ENCODE measurements at regions of chrX and their contacts with region 1.

Region 1: GRCh38 chrX:129823115-129823514 is 20.6 kb downstream of the ZDHHC9 start:
- DNase-seq: no peak
- ATAC-seq: peak; percentile 97
- H3K4me3 ChIP-seq: no peak overlapping the region
- H3K27ac ChIP-seq: no peak overlapping the region
- H3K4me1 ChIP-seq: no peaks in the 10 kb centered on the region
- H3K27me3 ChIP-seq: no peaks in the 10 kb centered on the region
- CTCF ChIP-seq: peak; percentile 66 to 77 (median 69)
- EP300 ChIP-seq: no peak
- POLR2A ChIP-seq: no peak
- RAD21 ChIP-seq: peak; percentile 78

Region 2: GRCh38 chrX:129606918-129607317 is 216.2 kb before region 1 on chrX:
- CTCF ChIA-PET with region 1: interaction called, 7 read pairs
- POLR2A ChIA-PET with region 1: no interaction called
- RAD21 ChIA-PET with region 1: no interaction called
- SMC1A ChIA-PET with region 1: interaction called, 5 read pairs
- in situ Hi-C with region 1: no loop called
- intact Hi-C with region 1: loop called (anchors 1 kb)
- DNase-seq: peak; percentile 13
- ATAC-seq: peak; percentile 67
- H3K4me3 ChIP-seq: no peak overlapping the region
- H3K27ac ChIP-seq: no peak overlapping the region
- H3K4me1 ChIP-seq: peaks cover 5% of the 10 kb centered on the region
- H3K27me3 ChIP-seq: no peaks in the 10 kb centered on the region; a peak in 2 of 4 replicates
- CTCF ChIP-seq: peak; percentile 74 to 80 (median 76)
- EP300 ChIP-seq: no peak
- POLR2A ChIP-seq: no peak
- RAD21 ChIP-seq: peak; percentile 82

Region 3: GRCh38 chrX:129655863-129656249 is 167.3 kb before region 1 on chrX:
- CTCF ChIA-PET with region 1: interaction called, 5 read pairs
- POLR2A ChIA-PET with region 1: no interaction called
- RAD21 ChIA-PET with region 1: interaction called, 6 read pairs
- SMC1A ChIA-PET with region 1: interaction called, 3 read pairs
- in situ Hi-C with region 1: no loop called
- intact Hi-C with region 1: loop called (anchors 1 kb)
- DNase-seq: no peak
- ATAC-seq: peak; percentile 51; the same call in 2 of the 3 replicates
- H3K4me3 ChIP-seq: no peak overlapping the region
- H3K27ac ChIP-seq: no peak overlapping the region
- H3K4me1 ChIP-seq: no peaks in the 10 kb centered on the region
- H3K27me3 ChIP-seq: peaks cover 4% of the 10 kb centered on the region in 2 experiments; a peak in 3 of 4 replicates
- CTCF ChIP-seq: peak; percentile 20 to 50 (median 37); a peak in 4 of 6 replicates
- EP300 ChIP-seq: no peak
- POLR2A ChIP-seq: no peak
- RAD21 ChIP-seq: peak; percentile 53

Region 4: GRCh38 chrX:129737916-129738315 is 85.2 kb before region 1 on chrX:
- CTCF ChIA-PET with region 1: interaction called, 3 read pairs
- POLR2A ChIA-PET with region 1: no interaction called
- RAD21 ChIA-PET with region 1: interaction called, 11 read pairs
- SMC1A ChIA-PET with region 1: interaction called, 4 read pairs
- in situ Hi-C with region 1: no loop called
- intact Hi-C with region 1: no loop called
- DNase-seq: no peak
- ATAC-seq: peak; percentile 67
- H3K4me3 ChIP-seq: no peak overlapping the region
- H3K27ac ChIP-seq: no peak overlapping the region
- H3K4me1 ChIP-seq: no peaks in the 10 kb centered on the region
- H3K27me3 ChIP-seq: no peaks in the 10 kb centered on the region; a peak in 1 of 4 replicates
- CTCF ChIP-seq: peak in 1 of 3 experiments; percentile 15; a peak in 1 of 6 replicates
- EP300 ChIP-seq: no peak
- POLR2A ChIP-seq: no peak
- RAD21 ChIP-seq: peak; percentile 31; the same call in 1 of the 2 replicates

Region 5: GRCh38 chrX:129759576-129760061 is 63.5 kb before region 1 on chrX:
- CTCF ChIA-PET with region 1: interaction called, 80 read pairs
- POLR2A ChIA-PET with region 1: interaction called, 4 read pairs
- RAD21 ChIA-PET with region 1: interaction called, 29 read pairs
- SMC1A ChIA-PET with region 1: interaction called, 27 read pairs
- in situ Hi-C with region 1: no loop called
- intact Hi-C with region 1: loop called (anchors 1 kb)
- DNase-seq: no peak
- ATAC-seq: peak; percentile 61
- H3K4me3 ChIP-seq: no peak overlapping the region
- H3K27ac ChIP-seq: peak overlapping the region; percentile 38; the same call in 1 of the 2 replicates
- H3K4me1 ChIP-seq: peaks cover 29% of the 10 kb centered on the region
- H3K27me3 ChIP-seq: no peaks in the 10 kb centered on the region
- CTCF ChIP-seq: 0 out of 6 replicates have a peak, but pooled peaks of 1 of the 3 experiments have one; percentile 20
- EP300 ChIP-seq: no peak
- POLR2A ChIP-seq: no peak
- RAD21 ChIP-seq: peak; percentile 44; the same call in 1 of the 2 replicates

Region 6: DNA sequence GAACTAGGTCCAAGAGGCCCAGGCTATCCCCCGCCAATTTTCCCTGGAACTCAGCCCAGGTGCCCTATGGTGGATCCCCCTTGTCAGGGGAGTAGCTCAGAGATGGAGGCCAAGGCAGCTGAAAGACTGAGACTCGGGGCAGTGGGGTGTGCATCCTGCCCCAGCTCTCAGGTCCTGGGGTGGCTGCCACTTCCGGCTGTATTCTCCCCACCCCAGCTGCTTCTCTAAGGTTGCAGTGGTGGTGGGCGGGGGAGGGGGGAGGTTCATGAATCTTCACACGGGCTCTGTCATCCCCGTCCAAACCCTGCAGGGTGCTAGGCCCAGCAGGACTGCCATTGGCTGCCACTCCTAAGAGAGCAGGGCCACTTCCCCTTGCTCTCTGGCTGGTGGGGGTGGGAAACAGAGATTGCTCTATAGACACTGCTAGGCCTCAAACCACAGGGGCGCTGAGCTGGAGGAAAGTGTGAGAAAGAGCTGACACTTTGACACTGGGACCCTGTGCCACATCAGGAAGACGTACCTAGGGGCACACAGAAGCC is 41.9 kb before region 1 on chrX:
- CTCF ChIA-PET with region 1: interaction called, 16 read pairs
- POLR2A ChIA-PET with region 1: no interaction called
- RAD21 ChIA-PET with region 1: interaction called, 8 read pairs
- SMC1A ChIA-PET with region 1: interaction called, 20 read pairs
- in situ Hi-C with region 1: no loop called
- intact Hi-C with region 1: loop called (anchors 1 kb)
- DNase-seq: peak; percentile 83
- ATAC-seq: peak; percentile 79
- H3K4me3 ChIP-seq: peak overlapping the region; percentile 84
- H3K27ac ChIP-seq: peak overlapping the region; percentile 96
- H3K4me1 ChIP-seq: peaks cover 54% of the 10 kb centered on the region
- H3K27me3 ChIP-seq: no peaks in the 10 kb centered on the region
- CTCF ChIP-seq: no peak
- EP300 ChIP-seq: peak in 1 of 2 experiments; percentile 16; a peak in 3 of 4 replicates
- POLR2A ChIP-seq: peak; percentile 77
- RAD21 ChIP-seq: no peak

Region 7: DNA sequence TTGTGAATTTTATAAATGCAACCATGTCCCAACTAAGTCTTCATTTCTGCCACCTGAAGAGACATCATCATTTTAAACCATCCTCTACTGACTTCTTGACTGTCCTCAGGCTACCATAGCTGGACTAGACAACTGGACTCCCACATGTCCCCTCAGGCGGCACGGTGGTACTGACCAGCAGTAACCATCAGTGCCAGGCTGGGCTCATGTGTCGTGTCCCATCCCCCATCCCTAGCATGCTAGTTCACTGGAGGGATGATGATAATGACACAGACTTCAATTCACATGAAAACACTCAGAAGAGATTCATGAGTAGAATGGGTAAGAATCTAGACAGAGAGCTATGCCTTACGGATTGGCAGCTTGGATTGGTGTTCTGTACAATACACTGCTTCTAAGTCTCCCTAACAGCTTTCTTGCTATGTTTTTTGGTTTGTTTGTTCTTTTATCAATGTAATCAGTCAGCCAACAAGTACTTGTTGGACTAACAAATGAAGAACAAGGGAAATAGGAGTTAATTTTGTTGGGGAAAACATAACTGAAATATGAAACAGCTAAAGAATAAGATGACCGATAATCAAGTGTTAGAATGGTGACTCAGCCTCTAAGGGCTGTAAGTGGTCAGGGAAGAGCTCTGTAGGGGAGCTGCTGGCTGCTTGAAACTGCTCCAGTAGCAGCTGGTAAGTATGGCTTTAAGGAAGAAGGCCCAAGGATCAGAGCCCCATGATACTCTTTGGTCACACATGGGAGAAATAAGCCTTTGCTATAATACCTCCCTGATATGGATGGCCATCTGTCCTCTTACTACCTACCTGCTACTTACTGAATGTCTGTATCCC is 10.3 kb after region 1 on chrX:
- CTCF ChIA-PET with region 1: interaction called, 12 read pairs
- POLR2A ChIA-PET with region 1: interaction called, 3 read pairs
- RAD21 ChIA-PET with region 1: interaction called, 4 read pairs
- SMC1A ChIA-PET with region 1: interaction called, 7 read pairs
- in situ Hi-C with region 1: no loop called
- intact Hi-C with region 1: no loop called
- DNase-seq: no peak
- ATAC-seq: no peak
- H3K4me3 ChIP-seq: no peak overlapping the region
- H3K27ac ChIP-seq: no peak overlapping the region
- H3K4me1 ChIP-seq: no peaks in the 10 kb centered on the region
- H3K27me3 ChIP-seq: no peaks in the 10 kb centered on the region; a peak in 1 of 4 replicates
- CTCF ChIP-seq: no peak
- EP300 ChIP-seq: no peak
- POLR2A ChIP-seq: no peak
- RAD21 ChIP-seq: no peak